Left ventricle myocardium superior (tissue), 1 donor: ENCODE measurements at regions of chr1 and their contacts with region 1.

Region 1: GRCh38 chr1:223081181-223081994 is 61.7 kb downstream of the TLR5 start:
- DNase-seq: peak; percentile 91
- ATAC-seq: peak; percentile 94

Region 2: DNA sequence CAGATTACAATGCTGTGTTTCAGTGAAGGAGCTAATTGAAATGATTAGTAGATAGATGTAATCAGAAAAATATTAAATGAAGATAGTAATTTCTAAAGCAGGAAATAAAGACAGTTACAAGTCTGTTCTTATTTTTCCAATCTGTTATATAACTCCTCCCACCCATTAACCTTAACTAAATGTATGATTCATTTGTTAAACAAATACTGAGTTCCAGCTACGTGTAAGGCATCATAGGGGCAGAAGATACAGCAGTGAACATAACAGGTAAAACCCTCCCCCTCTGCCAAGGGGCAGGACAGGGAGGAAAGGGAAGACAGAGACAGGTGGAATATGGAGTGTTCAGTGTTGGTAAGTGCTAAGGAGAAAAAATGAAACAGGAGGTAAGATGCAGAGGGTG is 344.4 kb before region 1 on chr1 and contains the start of gene FAM177B:
- intact Hi-C with region 1: loop called (anchors 5 kb)
- DNase-seq: no peak
- ATAC-seq: no peak
- total RNA-seq, gene FAM177B: not detected

Region 3: GRCh38 chr1:222792744-222793143 is 288.6 kb before region 1 on chr1:
- intact Hi-C with region 1: loop called (anchors 2 kb)
- DNase-seq: no peak
- ATAC-seq: no peak

Region 4: GRCh38 chr1:223142795-223143536 is 61.6 kb after region 1 on chr1 and contains the start of gene TLR5:
- intact Hi-C with region 1: no loop called
- DNase-seq: peak; percentile 94
- ATAC-seq: peak; percentile 97
- total RNA-seq, gene TLR5: 2.5 TPM

Region 5: DNA sequence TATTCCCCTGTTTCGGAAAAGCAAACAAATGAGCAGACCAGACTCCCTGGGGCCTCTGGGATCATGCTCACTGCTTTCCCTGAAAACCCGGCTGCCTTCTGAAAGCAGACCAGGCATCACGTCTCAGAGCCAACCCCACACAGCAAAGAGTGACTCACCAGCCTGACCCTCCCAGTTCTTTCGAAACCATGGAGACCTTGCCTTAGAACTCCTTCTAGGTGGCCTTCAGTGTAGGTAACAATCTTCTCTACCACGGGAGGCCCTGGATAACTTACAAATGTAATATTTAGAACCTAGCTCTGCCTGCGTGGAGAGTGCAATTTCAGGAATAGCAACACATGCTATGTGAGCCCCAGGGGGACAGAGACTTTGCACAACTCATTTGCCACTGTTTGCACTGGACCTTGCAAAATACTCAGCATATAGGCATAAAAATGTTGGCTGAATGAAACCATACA is 177.4 kb after region 1 on chr1:
- intact Hi-C with region 1: no loop called
- DNase-seq: no peak
- ATAC-seq: no peak

Region 6: DNA sequence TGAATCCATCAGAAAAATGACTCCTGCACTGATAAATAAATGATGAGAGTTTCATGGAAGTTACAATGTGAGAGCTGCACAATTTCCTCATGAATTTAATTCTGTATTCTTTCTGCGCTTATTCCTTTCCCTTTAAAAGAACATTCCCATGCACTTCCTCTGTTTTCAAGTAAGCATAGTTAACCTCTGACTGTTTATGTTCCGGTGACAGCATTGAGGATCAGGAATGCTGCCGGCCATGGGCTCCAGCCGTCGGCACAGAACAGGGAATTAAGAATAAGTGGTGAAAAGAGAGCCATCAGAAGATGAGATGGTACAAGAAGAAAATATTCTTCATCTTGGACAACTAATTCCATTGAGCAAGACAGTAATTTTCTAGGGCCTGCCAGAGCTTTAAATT is 217.3 kb after region 1 on chr1:
- intact Hi-C with region 1: no loop called
- DNase-seq: no peak
- ATAC-seq: no peak